ENCODE measurements at regions of chr22 and their contacts with region 1.

Region 1: GRCh38 chr22:40995836-40996235 is 44.7 kb downstream of the RBX1 start:
- DNase-seq: no peak
- ATAC-seq: no peak
- H3K4me3 ChIP-seq: no peak overlapping the region
- H3K4me3 Mint-ChIP-seq: no peak overlapping the region
- H3K27ac ChIP-seq: no peak overlapping the region
- H3K27ac Mint-ChIP-seq: no peak overlapping the region
- H3K4me1 ChIP-seq: no peaks in the 10 kb centered on the region
- H3K4me1 Mint-ChIP-seq: no peaks in the 10 kb centered on the region
- H3K27me3 ChIP-seq: peaks cover 0 to 3% of the 10 kb centered on the region in 2 experiments
- H3K27me3 Mint-ChIP-seq: peaks cover 12% of the 10 kb centered on the region
- CTCF ChIP-seq: no peak

Region 2: DNA sequence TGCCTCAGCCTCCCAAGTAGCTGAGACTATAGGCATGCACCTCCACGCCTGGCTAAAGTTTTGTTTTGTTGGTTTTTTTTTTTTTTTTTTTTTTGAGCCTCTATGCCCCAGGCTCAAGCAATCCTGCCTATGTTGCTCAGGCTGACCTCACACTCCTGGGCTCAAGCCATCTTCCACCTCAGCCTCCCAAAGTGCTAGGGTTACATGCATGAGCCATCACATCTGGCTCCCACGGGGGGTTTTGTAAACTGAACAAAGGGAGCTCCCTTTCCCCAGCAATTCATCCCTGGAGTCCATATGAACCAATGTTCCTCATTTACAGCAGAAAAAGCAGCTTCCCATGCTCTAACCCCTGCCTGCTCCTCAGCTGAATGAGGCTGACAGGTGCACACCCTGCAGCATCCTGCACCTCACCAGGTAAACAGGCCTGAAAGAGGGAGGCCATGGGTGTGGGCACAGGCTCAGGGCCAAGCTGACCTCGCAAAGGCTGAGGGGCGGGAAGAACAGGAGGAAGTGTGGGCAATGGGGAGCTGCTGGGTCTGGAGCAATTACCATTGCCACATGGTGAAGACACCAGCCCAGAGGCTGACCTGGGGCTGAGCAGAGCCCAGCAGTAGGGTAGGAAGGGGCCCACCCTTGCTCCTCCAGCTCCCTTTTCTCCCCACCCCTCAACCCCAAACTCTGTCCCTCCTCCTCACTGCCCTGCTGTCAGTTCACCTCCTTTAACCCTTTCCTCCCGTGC is 13.5 kb after region 1 on chr22:
- CTCF ChIA-PET with region 1: no interaction called
- POLR2A ChIA-PET with region 1: no interaction called
- intact Hi-C with region 1: loop called in 1 of 2 experiments (anchors 2 kb)
- DNase-seq: no peak
- ATAC-seq: no peak
- H3K4me3 ChIP-seq: no peak overlapping the region
- H3K4me3 Mint-ChIP-seq: no peak overlapping the region
- H3K27ac ChIP-seq: no peak overlapping the region
- H3K27ac Mint-ChIP-seq: no peak overlapping the region
- H3K4me1 ChIP-seq: no peaks in the 10 kb centered on the region
- H3K4me1 Mint-ChIP-seq: no peaks in the 10 kb centered on the region
- H3K27me3 ChIP-seq: no peaks in the 10 kb centered on the region
- H3K27me3 Mint-ChIP-seq: no peaks in the 10 kb centered on the region
- CTCF ChIP-seq: no peak

Measured in CD4-positive, alpha-beta T cell (primary cell).